ENCODE measurements at regions of chr9 and their contacts with region 1.

Region 1: DNA sequence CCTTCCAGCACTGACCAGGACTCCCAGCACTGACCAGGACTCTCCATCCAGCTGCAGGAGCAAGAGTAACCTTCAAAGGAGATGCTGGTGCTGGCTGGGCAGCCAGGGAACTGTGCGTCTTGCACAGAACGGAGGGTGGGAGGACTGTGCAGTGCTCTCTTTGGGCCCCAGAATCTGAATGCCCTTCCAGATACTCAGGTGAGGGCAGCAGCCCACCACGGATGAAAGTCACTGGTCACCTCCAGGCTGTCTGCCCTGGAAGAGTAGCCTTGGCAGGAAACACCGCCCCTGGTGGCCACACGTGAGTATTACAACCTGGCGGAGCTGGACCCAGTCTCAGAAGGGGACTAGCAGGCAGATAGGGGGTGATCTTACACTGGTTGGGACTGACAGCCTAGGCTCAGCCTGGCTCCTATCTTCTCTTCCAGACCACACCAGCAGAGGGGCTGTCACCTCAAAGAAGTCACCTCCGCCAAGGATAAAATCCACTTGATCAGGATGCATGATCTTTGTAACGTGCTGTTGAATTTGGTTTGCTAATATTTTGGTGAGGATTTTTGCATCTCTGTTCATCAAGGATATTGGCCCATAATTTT is 4.8 kb upstream of the SARDH start:
- DNase-seq: peak; percentile 91
- CTCF ChIP-seq: peak; percentile 97

Region 2: GRCh38 chr9:133532937-133533668 is 209.8 kb before region 1 on chr9:
- in situ Hi-C with region 1: loop called (anchors 25 kb)
- DNase-seq: peak; percentile 84
- CTCF ChIP-seq: peak; percentile 49

Region 3: GRCh38 chr9:133658442-133659431 is 84.2 kb before region 1 on chr9:
- in situ Hi-C with region 1: no loop called
- DNase-seq: no peak
- CTCF ChIP-seq: no peak

Measured in GM13976 (cell line).